Cardiac septum (tissue), 1 donor: ENCODE measurements at regions of chr2 and their contacts with region 1.

Region 1: GRCh38 chr2:213151437-213152064 is at the start of gene IKZF2:
- DNase-seq: peak; percentile 86
- total RNA-seq, gene IKZF2: 5.6 TPM

Region 2: GRCh38 chr2:212686285-212686895 is 465.2 kb before region 1 on chr2:
- intact Hi-C with region 1: loop called (anchors 2 kb)
- DNase-seq: no peak

Region 3: GRCh38 chr2:212777020-212777491 is 374.5 kb before region 1 on chr2:
- intact Hi-C with region 1: loop called (anchors 2 kb)
- DNase-seq: no peak

Region 4: GRCh38 chr2:212863185-212863588 is 288.4 kb before region 1 on chr2:
- intact Hi-C with region 1: loop called (anchors 5 kb)
- DNase-seq: no peak

Region 5: DNA sequence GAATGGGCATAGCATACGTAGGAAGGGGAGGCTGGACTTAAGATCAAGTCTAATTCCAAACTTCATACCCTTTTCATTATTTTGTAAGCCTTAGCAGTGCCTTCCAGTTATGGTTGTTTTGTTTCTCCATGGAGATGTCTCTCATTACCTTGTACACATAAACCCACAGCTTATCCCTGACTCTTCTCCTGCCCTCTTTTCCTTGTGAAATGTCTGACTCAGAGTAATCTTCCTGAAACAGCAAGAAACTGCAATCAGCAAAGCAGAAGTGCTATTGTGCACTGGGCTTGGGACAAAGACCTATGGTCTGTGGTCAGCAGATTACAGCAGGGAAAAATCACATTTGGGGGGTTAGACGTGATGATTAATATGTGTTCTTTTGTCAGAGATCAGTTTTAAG is 176.9 kb before region 1 on chr2:
- intact Hi-C with region 1: loop called (anchors 10 kb)
- DNase-seq: no peak

Region 6: GRCh38 chr2:213104092-213104902 is 47.3 kb before region 1 on chr2:
- intact Hi-C with region 1: loop called (anchors 5 kb)
- DNase-seq: no peak